Right cardiac atrium (tissue), 5 donors: ENCODE measurements at regions of chr9 and their contacts with region 1.

Region 1: DNA sequence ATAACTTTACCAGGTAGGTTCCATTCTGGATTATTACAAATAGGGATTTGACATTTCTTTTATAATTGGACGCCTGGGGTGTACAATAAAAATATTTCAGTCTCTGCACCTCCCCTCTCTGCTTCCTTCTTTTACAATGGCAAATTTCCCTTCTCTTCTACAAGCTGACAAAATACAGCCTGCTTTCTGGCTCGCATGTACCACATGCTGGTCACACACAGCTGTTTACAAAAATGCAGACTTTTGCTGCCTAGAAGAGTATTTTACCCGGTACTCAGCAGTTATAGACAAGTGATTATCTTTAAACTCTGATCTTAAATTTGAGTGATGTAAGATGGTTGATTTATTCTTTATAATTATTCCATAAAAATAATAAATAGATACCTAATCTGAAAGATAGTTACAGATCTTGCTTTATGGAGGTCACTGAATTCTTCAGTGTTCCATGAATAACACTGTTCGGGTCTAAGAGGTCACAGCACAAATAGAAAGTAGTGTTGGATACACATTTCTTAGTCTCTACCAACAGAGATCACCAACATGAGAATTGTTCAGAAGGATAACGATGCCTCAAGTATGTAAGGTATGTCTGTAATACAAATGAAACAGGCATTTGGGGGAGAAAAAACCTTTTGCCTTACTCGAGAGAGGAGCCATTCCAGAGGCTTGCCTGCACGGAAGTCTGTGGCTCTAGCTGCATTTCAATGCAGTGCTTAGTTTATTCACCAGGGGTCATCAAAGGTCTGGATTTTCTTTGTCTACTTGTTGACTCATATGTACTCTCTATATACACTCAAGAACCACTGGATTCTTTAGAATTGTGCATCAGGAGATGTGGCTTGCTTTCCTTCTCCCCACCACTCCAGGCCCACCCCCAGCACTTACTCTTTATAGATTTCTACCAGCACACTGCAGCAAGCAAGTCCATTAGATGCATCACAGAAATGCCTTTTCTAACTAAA is 206.6 kb upstream of the RFX3 start:
- DNase-seq: peak in 2 of 3 donors; percentile 16 to 53
- ATAC-seq: peak; percentile 96 to 97
- H3K4me3 ChIP-seq: no peak overlapping the region
- H3K27ac ChIP-seq: no peak overlapping the region
- H3K4me1 ChIP-seq: no peaks in the 10 kb centered on the region
- H3K27me3 ChIP-seq: no peaks in the 10 kb centered on the region

Region 2: DNA sequence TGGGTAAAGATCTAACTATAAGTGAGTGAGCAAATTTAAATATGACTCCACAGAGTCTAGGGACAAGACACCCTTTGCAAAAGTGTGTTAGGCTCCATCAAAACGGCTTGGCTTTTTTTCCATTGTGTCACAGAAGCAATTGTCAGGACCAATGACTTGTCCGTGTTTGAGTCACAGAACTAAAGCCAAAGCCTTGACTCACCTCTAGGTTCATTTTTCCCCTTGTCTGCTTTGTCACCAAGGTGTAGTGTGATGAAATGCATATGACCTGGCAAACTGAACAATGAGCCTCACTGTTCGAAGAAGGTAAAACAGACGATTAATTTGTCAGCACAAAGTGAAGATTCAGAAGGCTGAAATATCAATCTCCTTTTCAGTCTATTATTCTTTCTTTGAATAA is 236.5 kb after region 1 on chr9:
- intact Hi-C with region 1: no loop called
- DNase-seq: no peak
- ATAC-seq: no peak
- H3K4me3 ChIP-seq: no peak overlapping the region
- H3K27ac ChIP-seq: no peak overlapping the region
- H3K4me1 ChIP-seq: peaks cover 2% of the 10 kb centered on the region
- H3K27me3 ChIP-seq: no peaks in the 10 kb centered on the region

Region 3: GRCh38 chr9:4228606-4229005 is 496.2 kb after region 1 on chr9:
- intact Hi-C with region 1: loop called in 3 of 4 experiments (anchors 5 to 10 kb)
- DNase-seq: no peak
- ATAC-seq: peak; percentile 60 to 83
- H3K4me3 ChIP-seq: no peak overlapping the region
- H3K27ac ChIP-seq: no peak overlapping the region
- H3K4me1 ChIP-seq: peaks cover 3% of the 10 kb centered on the region
- H3K27me3 ChIP-seq: no peaks in the 10 kb centered on the region

Region 4: DNA sequence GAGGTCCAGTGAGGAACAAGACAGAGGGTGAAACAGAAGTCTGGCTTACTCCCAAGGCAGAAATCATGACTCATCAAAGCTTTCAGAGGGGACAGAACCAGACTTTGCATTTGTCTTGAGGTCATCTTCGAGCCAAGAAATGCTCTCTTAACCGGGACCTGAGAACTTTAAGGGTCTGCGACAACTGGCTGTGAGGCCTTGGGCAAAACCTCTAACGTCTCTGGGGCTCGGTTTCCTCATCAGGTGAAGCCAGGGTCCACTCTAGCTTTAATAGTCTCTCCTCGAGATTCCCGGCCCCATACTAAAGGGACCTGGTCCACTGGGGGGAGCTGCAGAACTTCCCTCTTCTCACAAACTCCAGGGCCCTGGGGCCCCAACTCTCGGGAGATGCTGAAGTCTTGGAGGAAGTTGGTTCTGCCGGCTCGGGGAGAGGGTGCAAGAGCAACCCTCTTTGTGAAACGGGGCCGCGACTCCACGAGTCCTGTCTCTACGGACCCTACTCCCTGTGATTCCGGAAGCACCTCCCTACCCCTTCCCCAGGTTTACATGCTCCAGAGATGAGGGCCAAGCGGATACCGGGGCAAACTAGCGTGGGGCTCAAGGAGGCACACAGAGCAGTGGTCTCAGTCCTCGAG is 564.9 kb after region 1 on chr9:
- intact Hi-C with region 1: loop called in 1 of 4 experiments (anchors 10 kb)
- DNase-seq: peak; percentile 63 to 86 (median 83)
- ATAC-seq: peak; percentile 55 to 63
- H3K4me3 ChIP-seq: peak overlapping the region; percentile 87
- H3K27ac ChIP-seq: peak overlapping the region; percentile 85
- H3K4me1 ChIP-seq: peaks cover 3% of the 10 kb centered on the region
- H3K27me3 ChIP-seq: no peaks in the 10 kb centered on the region

Region 5: DNA sequence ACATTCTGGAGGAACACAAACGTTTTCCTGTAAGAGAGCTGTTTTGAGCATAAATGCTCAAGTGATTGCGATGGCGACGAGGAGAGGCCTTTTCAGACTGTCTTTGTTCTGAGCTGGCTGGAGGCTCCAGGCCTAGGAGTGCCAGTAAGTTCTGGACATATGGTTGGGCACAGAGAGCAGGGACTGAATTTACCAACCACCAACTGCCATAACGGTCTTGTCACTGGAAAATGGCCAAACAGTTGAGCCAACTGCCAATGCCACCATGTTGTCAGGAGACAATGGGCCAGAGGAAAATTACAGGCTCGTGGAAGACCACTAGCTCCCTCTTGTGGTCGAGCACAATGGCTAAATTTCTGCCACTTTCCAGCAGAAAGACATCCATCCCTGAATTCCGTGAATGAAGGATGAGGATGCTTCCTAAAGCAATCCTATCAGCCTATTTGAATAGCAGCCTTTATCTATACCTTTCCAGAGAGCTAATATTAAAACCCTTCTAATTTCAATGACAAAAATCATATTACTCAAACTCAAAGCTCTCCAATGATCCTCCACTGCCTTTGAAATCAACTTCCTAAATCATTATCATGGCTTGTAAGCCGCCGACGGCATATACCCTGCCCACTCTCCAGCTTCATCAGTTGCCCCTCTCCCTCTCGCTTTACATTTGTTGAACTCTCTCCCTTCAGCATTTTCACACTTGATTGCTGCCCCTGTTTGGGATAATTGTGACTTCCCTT is 634.4 kb after region 1 on chr9:
- intact Hi-C with region 1: loop called in 2 of 4 experiments (anchors 10 kb)
- DNase-seq: no peak
- ATAC-seq: no peak
- H3K4me3 ChIP-seq: no peak overlapping the region
- H3K27ac ChIP-seq: no peak overlapping the region
- H3K4me1 ChIP-seq: no peaks in the 10 kb centered on the region
- H3K27me3 ChIP-seq: no peaks in the 10 kb centered on the region

Region 6: DNA sequence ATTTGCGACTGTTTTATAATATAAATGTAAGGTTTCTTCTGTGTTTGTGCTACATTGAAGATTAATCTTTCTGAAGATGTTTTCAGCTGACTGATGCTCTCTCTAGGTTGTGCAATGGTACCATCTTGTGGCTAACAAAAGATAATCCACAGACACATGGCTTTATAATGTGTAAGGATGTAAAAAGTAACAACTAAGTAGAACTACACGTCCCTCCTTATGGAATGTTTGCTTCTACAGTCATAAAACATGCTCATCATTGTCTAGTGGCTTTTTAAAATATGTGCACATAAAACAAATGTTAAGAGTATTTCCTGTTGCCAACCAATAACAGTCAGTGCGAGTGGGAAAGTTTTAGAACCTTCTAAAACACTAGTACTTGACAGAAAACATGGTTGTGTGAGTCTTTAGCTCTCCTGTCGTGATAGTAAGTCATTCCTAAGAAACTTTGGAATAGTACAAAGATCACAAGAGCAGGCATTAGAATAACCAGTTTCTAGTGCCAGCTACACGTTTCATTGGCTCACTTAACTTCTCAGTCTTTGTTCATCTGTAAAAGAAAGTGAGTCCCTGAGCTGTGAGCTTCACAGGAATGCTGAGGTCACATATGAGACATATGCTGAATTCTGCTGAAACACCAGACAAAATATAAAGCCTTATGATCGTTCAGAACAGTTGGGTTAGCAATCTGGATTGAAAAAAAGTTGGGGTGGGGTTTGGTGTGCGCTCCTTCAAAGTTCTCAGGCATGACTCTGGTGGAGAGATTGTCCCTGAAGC is 643.3 kb after region 1 on chr9:
- intact Hi-C with region 1: loop called in 1 of 4 experiments (anchors 10 kb)
- DNase-seq: no peak
- ATAC-seq: peak in 1 of 2 donors; percentile 54
- H3K4me3 ChIP-seq: no peak overlapping the region
- H3K27ac ChIP-seq: no peak overlapping the region
- H3K4me1 ChIP-seq: no peaks in the 10 kb centered on the region
- H3K27me3 ChIP-seq: no peaks in the 10 kb centered on the region